HEK293T (cell line): ENCODE measurements at regions of chr3 and their contacts with region 1.

Region 1: GRCh38 chr3:129942296-129942695 is 32.2 kb upstream of the TRH start:
- DNase-seq: peak; percentile 81

Region 2: GRCh38 chr3:129399145-129399894 is 543.0 kb before region 1 on chr3:
- CTCF ChIA-PET with region 1: no interaction called
- POLR2A ChIA-PET with region 1: no interaction called
- DNase-seq: peak; percentile 88

Region 3: GRCh38 chr3:129988429-129988828 is 46.1 kb after region 1 on chr3:
- CTCF ChIA-PET with region 1: interaction called, 16 read pairs
- POLR2A ChIA-PET with region 1: no interaction called
- DNase-seq: no peak

Region 4: GRCh38 chr3:130093741-130094391 is 151.6 kb after region 1 on chr3:
- CTCF ChIA-PET with region 1: interaction called, 34 read pairs
- POLR2A ChIA-PET with region 1: interaction called, 3 read pairs
- DNase-seq: no peak

Region 5: DNA sequence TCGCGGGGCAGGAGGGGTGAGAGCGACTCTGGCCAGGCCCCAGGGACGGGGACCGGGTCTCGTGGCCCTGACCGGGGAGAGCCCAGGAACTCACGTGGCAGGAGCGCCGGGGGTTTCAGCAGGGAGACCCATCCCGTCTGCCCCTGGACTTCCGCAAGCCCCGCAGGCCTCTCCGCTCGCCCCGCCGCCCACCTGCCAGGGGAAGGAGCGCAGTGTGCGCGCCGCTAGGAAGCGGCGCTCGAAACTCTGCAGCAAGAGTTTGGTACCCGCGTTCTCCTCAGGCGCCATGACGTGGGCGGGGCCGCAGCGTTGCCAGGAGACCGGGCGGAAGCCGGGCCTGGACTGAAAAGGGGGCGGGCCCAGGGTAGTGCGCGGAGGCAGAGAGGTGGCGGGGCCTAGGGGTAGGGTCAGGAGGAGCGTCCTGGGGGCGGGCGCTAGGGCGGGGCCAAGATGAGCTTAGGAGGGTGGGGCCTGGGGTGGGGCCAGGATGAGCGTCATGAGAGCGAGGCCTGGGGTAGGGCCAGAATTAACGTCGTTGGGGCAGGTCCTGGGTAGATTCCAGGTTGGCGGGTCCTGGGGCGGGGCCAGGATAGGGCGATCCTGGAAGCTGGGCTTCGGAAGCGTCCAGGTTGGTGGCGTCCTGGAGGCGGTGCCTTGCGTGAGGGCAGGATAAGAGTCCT is 169.0 kb after region 1 on chr3:
- CTCF ChIA-PET with region 1: interaction called, 11 read pairs
- POLR2A ChIA-PET with region 1: no interaction called
- DNase-seq: peak; percentile 85